PC-9 (cell line): ENCODE measurements at regions of chr2 and their contacts with region 1.

Region 1: GRCh38 chr2:64400733-64401500 is 53.0 kb upstream of the LGALSL start:
- DNase-seq: peak; percentile 65 to 86
- H3K4me3 ChIP-seq: peak overlapping the region; percentile 5; the same call in 1 of the 2 replicates
- H3K27ac ChIP-seq: peak overlapping the region; percentile 93
- H3K4me1 ChIP-seq: peaks cover 56% of the 10 kb centered on the region
- H3K27me3 ChIP-seq: no peaks in the 10 kb centered on the region
- CTCF ChIP-seq: no peak

Region 2: GRCh38 chr2:64453770-64454385 is 53.0 kb after region 1 on chr2 and contains the start of gene LGALSL:
- CTCF ChIA-PET with region 1: no interaction called
- POLR2A ChIA-PET with region 1: interaction called, 12 read pairs
- intact Hi-C with region 1: loop called (anchors 2 kb)
- DNase-seq: peak; percentile 71 to 88
- H3K4me3 ChIP-seq: peak within 1 kb of the TSS; percentile 65
- H3K27ac ChIP-seq: peak within 1 kb of the TSS; percentile 99
- H3K4me1 ChIP-seq: peaks cover 22% of the 10 kb centered on the region
- H3K27me3 ChIP-seq: no peaks in the 10 kb centered on the region
- CTCF ChIP-seq: no peak
- total RNA-seq, gene LGALSL: 9.7 and 13.0 TPM in 2 replicates